Naive thymus-derived CD4-positive, alpha-beta T cell (primary cell): ENCODE measurements at regions of chr17 and their contacts with region 1.

Region 1: DNA sequence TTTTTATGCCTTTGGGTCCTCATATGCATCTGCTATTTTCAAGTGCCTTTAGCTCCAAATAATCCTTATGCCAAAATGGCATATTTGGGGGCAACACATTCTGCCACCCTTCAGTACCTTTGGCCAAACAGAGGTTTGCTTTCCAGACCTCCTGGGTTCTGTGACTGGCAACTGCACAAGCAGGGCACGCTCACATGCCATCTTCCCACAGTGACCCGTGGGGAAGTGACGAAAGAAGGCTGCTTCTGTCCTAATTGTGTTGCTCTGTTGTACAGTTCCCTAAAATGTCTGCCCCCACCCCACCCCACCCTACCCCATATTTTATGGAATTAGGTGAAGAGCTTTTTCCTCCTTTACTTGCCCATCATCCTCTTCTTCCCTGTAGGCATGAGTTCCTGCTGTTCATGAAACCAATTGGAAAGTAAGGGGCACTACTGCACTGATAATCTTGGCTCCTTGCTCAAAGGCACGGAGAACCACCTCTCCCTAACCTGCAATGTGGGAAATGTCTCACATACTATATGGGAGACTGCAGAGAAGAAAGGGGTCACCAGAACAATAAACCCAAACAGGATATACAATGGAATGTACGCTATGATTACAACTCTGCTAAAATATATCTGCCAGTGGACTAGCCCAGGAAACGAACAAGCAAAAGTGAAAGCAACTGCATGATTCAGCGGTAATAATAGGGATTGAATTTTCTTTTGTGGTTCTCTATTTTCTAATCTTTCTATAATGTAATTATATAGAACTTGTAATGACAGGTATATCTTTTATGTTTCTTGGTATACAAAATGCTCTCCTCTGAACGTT is 3.3 kb upstream of the SLFN12L start:
- DNase-seq: peak; percentile 16 to 42 (median 36)
- ATAC-seq: peak; percentile 65
- H3K4me3 ChIP-seq: peak overlapping the region; percentile 64
- H3K4me3 Mint-ChIP-seq: peak overlapping the region; percentile 75 to 99 (median 87)
- H3K27ac ChIP-seq: peak overlapping the region; percentile 74
- H3K27ac Mint-ChIP-seq: peak overlapping the region; percentile 88 to 99 (median 95)
- H3K4me1 ChIP-seq: peaks cover 25 to 30% of the 10 kb centered on the region in 2 donors
- H3K4me1 Mint-ChIP-seq: peaks cover 32 to 64% (median 55%) of the 10 kb centered on the region in 7 donors
- H3K27me3 ChIP-seq: no peaks in the 10 kb centered on the region
- H3K27me3 Mint-ChIP-seq: no peaks in the 10 kb centered on the region

Region 2: DNA sequence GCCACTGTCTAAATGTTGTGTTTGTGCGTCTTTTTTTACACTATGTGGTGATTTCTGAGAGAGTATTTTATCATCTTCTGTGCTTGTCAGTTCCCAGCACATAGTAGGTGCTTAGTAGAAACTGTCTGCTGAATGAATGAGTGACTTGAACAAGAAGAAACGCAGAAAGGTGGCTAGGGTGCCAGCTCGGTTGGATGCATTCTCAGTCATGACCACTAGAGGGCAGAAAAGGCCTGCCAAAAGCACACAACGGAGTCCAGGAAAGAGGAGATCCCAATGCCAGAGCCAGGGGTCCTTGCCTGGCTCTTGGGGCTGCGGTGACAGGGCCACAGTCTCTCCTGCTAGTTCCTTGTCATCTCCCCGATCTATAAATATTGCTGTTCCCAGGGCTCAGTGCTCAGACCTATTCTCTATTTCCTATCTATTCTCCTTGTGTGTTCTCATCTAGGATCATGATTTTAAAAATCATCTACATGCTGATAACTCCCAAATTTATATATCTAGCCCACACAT is 1120.5 kb before region 1 on chr17:
- CTCF ChIA-PET with region 1: no interaction called
- POLR2A ChIA-PET with region 1: no interaction called
- intact Hi-C with region 1: loop called in 1 of 2 experiments (anchors 1 kb)
- DNase-seq: peak; percentile 20 to 68 (median 50)
- ATAC-seq: peak; percentile 67
- H3K4me3 ChIP-seq: no peak overlapping the region
- H3K4me3 Mint-ChIP-seq: no peak overlapping the region
- H3K27ac ChIP-seq: no peak overlapping the region
- H3K27ac Mint-ChIP-seq: peak overlapping the region in 1 of 9 donors; percentile 31
- H3K4me1 ChIP-seq: no peaks in the 10 kb centered on the region
- H3K4me1 Mint-ChIP-seq: peaks cover 0 to 8% (median 4%) of the 10 kb centered on the region in 7 donors
- H3K27me3 ChIP-seq: no peaks in the 10 kb centered on the region
- H3K27me3 Mint-ChIP-seq: peaks cover 19 to 58% (median 40%) of the 10 kb centered on the region in 5 donors

Region 3: DNA sequence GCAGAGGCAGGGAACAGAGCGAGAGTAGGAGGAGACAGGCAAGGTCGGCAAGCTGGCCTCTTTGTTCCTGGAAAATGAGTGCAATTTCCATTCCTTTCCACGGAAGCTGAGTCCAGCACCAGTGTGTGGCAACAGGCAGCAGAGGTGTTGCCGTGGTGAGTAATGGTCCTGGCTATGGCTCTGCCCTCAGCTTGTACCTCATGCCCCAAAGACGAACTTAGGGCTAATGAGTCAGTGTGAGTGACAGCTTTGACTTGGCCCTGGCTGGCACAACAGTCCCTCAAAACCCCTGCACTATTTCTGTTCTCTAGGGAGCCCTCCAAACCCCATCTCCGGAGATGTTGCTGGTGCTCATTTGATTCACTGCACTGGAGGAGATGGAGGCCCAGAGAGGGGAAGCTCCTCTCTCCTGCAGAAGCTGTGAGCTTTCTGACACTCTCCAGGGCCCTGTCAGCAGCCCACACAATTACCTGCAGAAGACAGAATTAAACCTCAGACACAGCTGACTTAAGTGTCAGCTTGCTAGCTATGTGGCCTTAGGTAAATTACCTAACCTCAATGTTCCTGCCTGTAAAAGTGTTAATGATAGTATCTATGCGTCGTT is 831.5 kb before region 1 on chr17:
- CTCF ChIA-PET with region 1: no interaction called
- POLR2A ChIA-PET with region 1: no interaction called
- intact Hi-C with region 1: no loop called
- DNase-seq: no peak
- ATAC-seq: no peak
- H3K4me3 ChIP-seq: no peak overlapping the region
- H3K4me3 Mint-ChIP-seq: no peak overlapping the region
- H3K27ac ChIP-seq: no peak overlapping the region
- H3K27ac Mint-ChIP-seq: no peak overlapping the region
- H3K4me1 ChIP-seq: no peaks in the 10 kb centered on the region
- H3K4me1 Mint-ChIP-seq: no peaks in the 10 kb centered on the region
- H3K27me3 ChIP-seq: no peaks in the 10 kb centered on the region
- H3K27me3 Mint-ChIP-seq: peaks cover 0 to 43% (median 34%) of the 10 kb centered on the region in 5 donors

Region 4: GRCh38 chr17:34998205-34998604 is 542.6 kb before region 1 on chr17:
- CTCF ChIA-PET with region 1: no interaction called
- POLR2A ChIA-PET with region 1: no interaction called
- intact Hi-C with region 1: loop called in 1 of 2 experiments (anchors 2 kb)
- DNase-seq: peak; percentile 62 to 82 (median 76)
- ATAC-seq: peak; percentile 96
- H3K4me3 ChIP-seq: no peak overlapping the region
- H3K4me3 Mint-ChIP-seq: no peak overlapping the region
- H3K27ac ChIP-seq: no peak overlapping the region
- H3K27ac Mint-ChIP-seq: peak overlapping the region; percentile 60 to 89 (median 82)
- H3K4me1 ChIP-seq: no peaks in the 10 kb centered on the region
- H3K4me1 Mint-ChIP-seq: peaks cover 5 to 10% (median 6%) of the 10 kb centered on the region in 7 donors
- H3K27me3 ChIP-seq: no peaks in the 10 kb centered on the region
- H3K27me3 Mint-ChIP-seq: no peaks in the 10 kb centered on the region

Region 5: GRCh38 chr17:35170968-35171771 is 369.6 kb before region 1 on chr17:
- CTCF ChIA-PET with region 1: interaction called, 19 read pairs
- POLR2A ChIA-PET with region 1: interaction called, 4 read pairs
- intact Hi-C with region 1: loop called (anchors 1 kb)
- DNase-seq: peak in 7 of 9 donors; percentile 35 to 77 (median 70)
- ATAC-seq: peak; percentile 86
- H3K4me3 ChIP-seq: peak overlapping the region; percentile 25
- H3K4me3 Mint-ChIP-seq: peak overlapping the region in 8 of 10 donors; percentile 46 to 79 (median 70)
- H3K27ac ChIP-seq: peak overlapping the region; percentile 47
- H3K27ac Mint-ChIP-seq: peak overlapping the region; percentile 65 to 96 (median 89)
- H3K4me1 ChIP-seq: peaks cover 16 to 20% of the 10 kb centered on the region in 2 donors
- H3K4me1 Mint-ChIP-seq: peaks cover 24 to 59% (median 44%) of the 10 kb centered on the region in 7 donors
- H3K27me3 ChIP-seq: no peaks in the 10 kb centered on the region
- H3K27me3 Mint-ChIP-seq: no peaks in the 10 kb centered on the region

Region 6: DNA sequence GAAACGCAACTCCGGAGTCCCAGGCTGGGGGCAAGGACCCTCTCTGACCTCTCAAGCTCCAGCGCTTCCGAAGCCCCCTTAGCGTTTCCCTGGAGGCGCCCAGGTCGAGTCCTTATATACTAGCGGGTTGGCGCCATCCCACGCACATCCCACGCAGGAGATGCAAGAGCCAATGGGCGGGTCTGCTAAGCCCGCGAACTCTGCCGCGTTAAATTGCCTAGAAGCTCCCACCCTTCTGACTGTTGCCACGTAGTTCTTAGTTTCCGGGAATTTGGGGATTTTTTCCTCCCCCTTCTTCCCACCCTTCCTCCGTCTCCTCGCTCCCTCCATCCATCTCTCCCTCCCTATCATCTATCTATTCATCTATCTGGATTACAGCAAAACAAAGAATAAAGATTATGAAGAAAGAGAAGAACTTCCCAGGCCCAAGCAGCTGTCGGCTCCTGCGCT is 167.2 kb before region 1 on chr17 and contains the start of gene SLFN11:
- CTCF ChIA-PET with region 1: interaction called, 4 read pairs
- POLR2A ChIA-PET with region 1: interaction called, 18 read pairs
- intact Hi-C with region 1: loop called (anchors 1 kb)
- DNase-seq: peak; percentile 49 to 94 (median 80)
- ATAC-seq: peak; percentile 92
- H3K4me3 ChIP-seq: peak within 1 kb of the TSS; percentile 92
- H3K4me3 Mint-ChIP-seq: peak within 1 kb of the TSS; percentile 94 to 99 (median 98)
- H3K27ac ChIP-seq: peak within 1 kb of the TSS; percentile 99
- H3K27ac Mint-ChIP-seq: peak within 1 kb of the TSS; percentile 92 to 99 (median 99)
- H3K4me1 ChIP-seq: peaks cover 2 to 13% of the 10 kb centered on the region in 2 donors
- H3K4me1 Mint-ChIP-seq: peaks cover 23 to 74% (median 54%) of the 10 kb centered on the region in 7 donors
- H3K27me3 ChIP-seq: no peaks in the 10 kb centered on the region
- H3K27me3 Mint-ChIP-seq: peaks cover 0 to 8% (median 0%) of the 10 kb centered on the region in 5 donors
- total RNA-seq, gene SLFN11: 13.8 to 71.9 (median 29.7) TPM

Region 7: DNA sequence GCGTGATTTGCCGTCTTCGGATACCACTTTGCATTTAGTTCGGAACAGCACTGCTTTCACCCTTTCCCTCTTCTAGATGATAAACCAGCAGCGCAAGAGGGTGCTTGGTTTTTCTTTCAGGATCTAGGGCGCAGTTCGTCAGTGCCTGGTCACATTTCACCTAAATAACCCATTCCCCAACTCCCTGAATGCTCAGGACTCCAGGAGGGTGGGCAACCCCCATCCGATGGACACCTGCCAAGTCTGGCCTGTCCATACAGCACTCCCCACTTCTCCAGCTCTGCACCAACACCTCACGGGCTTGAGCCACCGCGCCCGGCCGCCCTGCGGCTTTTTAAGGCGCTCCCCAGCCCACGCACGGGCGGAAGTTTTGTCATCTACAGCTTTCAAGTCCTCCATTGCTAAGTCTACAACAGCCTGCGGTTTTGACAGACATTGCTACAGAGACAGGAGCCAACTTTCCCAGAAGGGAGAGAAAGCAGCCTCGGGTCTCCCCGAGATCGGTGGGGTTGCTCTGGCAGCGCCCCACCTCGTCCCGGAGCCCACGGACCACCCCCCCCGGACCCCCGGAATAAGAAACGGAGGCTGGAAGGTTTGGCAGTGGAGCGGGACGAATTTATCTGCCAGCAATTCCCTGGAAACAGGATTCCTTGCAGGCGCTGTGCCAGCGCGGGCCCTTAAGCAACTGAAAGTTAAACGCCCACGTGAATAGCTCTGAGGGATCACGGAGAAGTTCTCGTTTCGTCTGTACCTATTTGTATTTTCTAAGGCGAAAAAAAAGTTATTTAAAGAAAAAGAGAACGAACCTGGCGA is 53.7 kb before region 1 on chr17:
- CTCF ChIA-PET with region 1: interaction called, 9 read pairs
- POLR2A ChIA-PET with region 1: interaction called, 133 read pairs
- intact Hi-C with region 1: loop called (anchors 2 kb)
- DNase-seq: peak; percentile 39 to 88 (median 77)
- ATAC-seq: peak; percentile 85
- H3K4me3 ChIP-seq: peak overlapping the region; percentile 90
- H3K4me3 Mint-ChIP-seq: peak overlapping the region; percentile 80 to 99 (median 94)
- H3K27ac ChIP-seq: peak overlapping the region; percentile 82
- H3K27ac Mint-ChIP-seq: peak overlapping the region; percentile 84 to 98 (median 97)
- H3K4me1 ChIP-seq: peaks cover 10 to 24% of the 10 kb centered on the region in 2 donors
- H3K4me1 Mint-ChIP-seq: peaks cover 23 to 67% (median 45%) of the 10 kb centered on the region in 7 donors
- H3K27me3 ChIP-seq: no peaks in the 10 kb centered on the region
- H3K27me3 Mint-ChIP-seq: peaks cover 0 to 12% (median 0%) of the 10 kb centered on the region in 5 donors

Region 8: DNA sequence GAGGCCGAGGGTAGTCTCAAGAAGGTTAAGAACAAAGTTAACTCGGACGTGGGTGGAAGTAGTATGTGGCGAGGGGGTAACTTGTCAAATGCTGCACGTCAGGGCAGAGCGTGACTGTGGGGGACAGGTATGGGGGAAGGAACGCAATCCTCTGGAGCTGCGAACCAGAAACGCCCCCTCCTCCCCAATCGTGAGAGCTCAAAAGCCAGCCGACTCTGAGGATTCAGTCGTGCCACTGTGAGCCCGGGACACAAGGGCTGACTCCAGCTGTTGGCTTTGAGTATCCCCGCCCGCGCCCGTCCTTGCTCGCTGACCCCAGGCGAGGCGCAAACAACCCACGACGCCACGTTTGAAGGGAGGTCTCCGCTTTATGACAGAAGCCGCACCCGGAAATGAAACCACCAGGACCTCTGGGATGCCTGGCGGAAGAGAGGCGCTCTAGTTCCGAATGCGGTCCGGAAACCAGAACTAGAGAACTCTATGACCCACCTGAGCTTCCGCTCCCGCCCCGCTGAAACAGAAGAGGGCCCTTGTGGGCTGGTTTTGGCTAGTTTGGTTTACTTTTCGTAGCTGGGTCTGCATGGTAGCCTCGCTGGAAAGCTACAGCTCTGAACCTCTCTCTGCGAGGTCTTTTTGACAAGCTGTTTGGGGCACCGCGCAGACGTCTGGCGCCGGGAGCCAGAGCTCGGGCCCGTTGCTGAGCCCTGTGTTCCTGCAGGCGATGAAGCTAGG is 37.6 kb after region 1 on chr17 and contains the start of gene PEX12:
- CTCF ChIA-PET with region 1: interaction called, 5 read pairs
- POLR2A ChIA-PET with region 1: interaction called, 97 read pairs
- intact Hi-C with region 1: loop called (anchors 2 kb)
- DNase-seq: peak; percentile 62 to 94 (median 89)
- ATAC-seq: peak; percentile 99
- H3K4me3 ChIP-seq: peak within 1 kb of the TSS; percentile 86
- H3K4me3 Mint-ChIP-seq: peak within 1 kb of the TSS; percentile 92 to 100 (median 97)
- H3K27ac ChIP-seq: peak within 1 kb of the TSS; percentile 92
- H3K27ac Mint-ChIP-seq: peak within 1 kb of the TSS; percentile 96 to 100 (median 99)
- H3K4me1 ChIP-seq: peaks cover 5 to 12% of the 10 kb centered on the region in 2 donors
- H3K4me1 Mint-ChIP-seq: peaks cover 6 to 40% (median 32%) of the 10 kb centered on the region in 7 donors
- H3K27me3 ChIP-seq: no peaks in the 10 kb centered on the region
- H3K27me3 Mint-ChIP-seq: peaks cover 0 to 2% (median 0%) of the 10 kb centered on the region in 5 donors
- total RNA-seq, gene PEX12: 2.9 to 8.0 (median 5.3) TPM